ENCODE measurements at regions of chr2 and their contacts with region 1.

Region 1: GRCh38 chr2:97740590-97741182 is 27.3 kb downstream of the ZAP70 start:
- DNase-seq: peak; percentile 87
- CTCF ChIP-seq: peak; percentile 80

Region 2: DNA sequence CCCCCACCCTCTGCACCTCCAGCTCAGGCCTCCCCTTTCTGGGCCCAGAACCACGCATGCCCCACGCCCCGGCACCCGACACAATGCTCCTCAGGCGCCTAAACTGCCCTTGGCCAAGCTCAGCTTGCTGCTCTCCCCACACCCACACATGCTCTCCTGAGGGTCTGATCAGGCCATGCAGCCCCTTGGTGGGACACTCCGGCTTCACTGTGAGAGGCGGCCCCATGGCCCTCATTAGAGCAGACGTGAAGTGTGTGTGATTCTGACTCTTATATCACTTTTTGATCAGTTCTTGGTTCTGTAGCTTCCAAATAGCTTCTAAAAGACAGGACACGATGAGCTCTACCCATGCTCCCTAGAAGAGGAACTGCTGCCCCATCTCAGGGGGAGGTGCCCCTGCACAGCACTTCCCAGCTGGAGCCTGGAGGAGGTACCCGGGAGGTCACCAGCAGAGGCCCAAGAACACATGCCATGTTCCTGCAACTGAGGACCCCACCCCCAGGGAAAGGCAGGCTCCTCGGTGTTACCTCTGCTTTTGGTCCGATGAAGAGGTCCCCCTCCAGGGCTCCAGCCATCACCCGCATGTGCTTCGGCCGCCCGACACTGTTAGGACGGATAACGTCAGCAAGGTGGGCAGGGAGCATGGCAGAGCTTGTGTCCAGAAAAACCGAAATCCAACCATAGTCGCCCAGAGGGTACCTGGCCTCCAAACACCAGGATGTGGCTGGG is 80.5 kb before region 1 on chr2:
- CTCF ChIA-PET with region 1: no interaction called
- POLR2A ChIA-PET with region 1: no interaction called
- DNase-seq: no peak
- CTCF ChIP-seq: no peak

Region 3: DNA sequence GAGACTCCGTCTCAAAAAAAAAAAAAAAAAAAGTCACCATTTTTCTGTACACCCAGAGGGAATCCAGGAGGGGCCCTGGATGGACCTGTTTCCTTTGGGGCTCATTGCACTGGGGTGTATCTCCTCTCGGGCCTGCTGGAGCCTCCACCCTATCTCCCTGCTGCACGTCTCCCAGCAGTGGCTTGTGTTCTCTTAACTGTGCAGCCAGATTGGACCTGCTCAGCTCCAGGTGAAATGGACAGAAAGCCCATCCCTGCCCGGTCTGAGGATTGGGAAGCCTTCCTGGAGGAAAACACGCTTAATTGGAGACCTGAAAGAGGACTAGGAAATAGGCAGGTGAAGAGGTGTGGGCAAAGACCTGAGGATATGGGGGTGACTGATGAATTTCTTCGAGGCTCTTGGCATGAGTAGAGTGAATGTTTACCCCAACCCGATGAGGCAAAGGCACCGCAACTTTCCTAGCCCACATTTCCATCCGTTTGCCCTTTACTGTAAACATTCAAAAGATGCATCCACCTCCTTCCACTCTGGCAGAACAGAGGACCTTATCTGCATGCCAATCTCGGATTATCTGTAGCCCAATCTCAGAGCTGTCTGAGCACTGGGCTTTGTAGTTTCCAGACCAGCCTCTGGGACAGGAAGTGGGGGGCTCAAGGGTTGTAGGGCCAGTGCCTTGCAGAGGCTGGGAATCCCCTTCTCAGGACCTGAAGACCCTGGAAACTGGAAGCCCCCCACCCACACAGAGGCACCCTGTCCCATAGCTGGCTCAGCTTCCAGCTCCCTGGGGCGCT is 29.9 kb before region 1 on chr2:
- CTCF ChIA-PET with region 1: interaction called, 13 read pairs
- POLR2A ChIA-PET with region 1: no interaction called
- DNase-seq: no peak
- CTCF ChIP-seq: no peak

Region 4: DNA sequence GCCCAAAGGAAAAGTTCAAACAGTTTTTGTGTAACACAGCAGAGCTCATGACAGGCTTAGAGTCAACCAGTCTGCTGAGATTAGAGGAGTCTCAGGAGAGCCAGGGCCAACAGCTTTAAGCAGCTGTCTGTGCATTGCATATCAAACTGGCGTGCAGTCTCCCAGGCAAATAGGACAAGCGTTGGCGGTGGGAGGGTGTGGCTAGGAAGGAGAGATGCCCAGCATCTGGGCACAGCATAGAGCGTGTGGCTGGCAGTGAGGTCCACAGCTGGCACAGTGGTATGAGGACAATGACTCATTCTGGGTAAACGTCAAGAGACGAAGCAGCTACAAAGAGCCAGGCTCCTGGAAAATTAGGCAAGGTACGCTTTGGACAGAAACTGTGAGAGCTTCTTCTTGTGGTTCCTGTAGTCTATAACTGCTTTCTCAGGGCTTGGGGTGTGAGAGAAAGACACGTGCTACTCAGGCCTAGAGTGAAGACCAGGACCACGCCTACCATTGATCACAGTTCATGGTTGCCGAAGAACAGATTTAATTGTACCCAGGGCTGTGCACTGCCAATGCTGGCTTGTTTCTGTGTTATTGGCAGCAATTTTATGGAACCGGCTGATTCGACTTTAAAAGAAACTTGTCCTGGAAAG is 12.5 kb before region 1 on chr2:
- CTCF ChIA-PET with region 1: interaction called, 28 read pairs
- POLR2A ChIA-PET with region 1: no interaction called
- DNase-seq: no peak
- CTCF ChIP-seq: no peak

Region 5: DNA sequence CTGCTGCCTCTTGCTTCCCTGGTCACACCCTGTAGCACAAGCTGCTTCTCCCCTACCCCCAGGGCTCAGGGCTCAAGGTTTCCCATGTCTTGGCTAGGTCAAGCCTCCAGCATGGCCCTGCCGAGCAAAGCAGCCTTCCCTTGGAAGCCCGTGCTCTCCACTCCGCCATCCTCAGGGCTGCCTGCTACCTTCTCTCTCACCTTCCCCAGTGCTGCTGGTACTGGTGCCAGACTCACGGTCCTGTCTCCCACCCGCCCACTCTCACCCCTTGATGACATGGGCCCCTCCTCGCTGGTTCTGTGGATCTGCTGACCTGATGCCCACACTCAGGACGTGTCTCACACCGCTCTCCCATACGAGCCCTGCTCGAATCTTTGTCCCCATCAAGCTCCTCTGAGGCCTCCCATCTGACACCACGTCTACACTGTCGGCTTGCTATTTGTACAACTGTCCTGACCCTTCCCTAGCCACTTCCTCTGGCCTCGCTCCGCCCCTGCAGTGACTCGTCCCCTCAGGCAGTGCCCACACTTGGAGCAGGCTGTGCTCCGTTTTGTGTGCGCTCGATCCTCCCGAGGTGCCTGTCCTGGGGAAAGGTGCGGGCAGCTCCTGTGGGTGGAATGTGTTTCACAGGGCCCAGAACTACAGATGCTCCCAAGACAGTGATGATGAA is 22.6 kb after region 1 on chr2:
- CTCF ChIA-PET with region 1: interaction called, 26 read pairs
- POLR2A ChIA-PET with region 1: no interaction called
- DNase-seq: no peak
- CTCF ChIP-seq: no peak

Region 6: DNA sequence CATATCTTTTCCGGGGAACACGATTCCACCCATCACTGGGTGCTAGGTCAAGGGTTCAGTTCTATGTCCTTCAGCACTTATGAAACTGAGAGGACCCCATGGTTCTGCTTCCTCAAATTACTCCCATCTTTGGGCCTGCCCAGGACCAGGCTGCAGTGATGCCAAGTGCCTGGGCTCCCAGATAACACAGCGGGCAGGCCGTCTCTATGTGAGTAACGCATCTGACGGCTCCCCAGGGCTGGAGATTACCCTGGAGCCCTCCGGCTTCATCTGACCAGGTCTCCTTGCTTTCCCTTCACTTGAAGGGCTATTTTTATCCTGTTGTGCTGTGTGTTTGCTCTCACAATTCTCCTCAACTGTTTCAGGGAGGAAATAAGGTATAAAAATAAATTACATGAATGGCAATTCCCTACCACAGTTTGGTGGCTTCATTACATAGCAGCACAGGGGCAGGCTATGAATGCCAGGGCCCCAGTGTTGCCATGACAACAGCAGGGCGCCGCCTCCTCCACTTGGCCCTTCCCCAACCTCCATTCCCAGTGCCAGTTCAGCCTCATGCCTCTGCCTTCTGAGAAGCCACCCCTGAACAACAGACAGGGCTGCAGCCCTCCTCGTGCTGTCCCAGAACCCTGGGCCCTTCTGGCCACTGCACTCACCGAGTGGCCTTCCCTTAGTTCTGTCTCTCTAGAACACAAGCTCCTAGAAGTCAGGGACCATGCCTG is 280.5 kb after region 1 on chr2:
- CTCF ChIA-PET with region 1: no interaction called
- POLR2A ChIA-PET with region 1: no interaction called
- DNase-seq: no peak
- CTCF ChIP-seq: no peak